Astrocyte of the cerebellum (primary cell): ENCODE measurements at regions of chr7 and their contacts with region 1.

Region 1: DNA sequence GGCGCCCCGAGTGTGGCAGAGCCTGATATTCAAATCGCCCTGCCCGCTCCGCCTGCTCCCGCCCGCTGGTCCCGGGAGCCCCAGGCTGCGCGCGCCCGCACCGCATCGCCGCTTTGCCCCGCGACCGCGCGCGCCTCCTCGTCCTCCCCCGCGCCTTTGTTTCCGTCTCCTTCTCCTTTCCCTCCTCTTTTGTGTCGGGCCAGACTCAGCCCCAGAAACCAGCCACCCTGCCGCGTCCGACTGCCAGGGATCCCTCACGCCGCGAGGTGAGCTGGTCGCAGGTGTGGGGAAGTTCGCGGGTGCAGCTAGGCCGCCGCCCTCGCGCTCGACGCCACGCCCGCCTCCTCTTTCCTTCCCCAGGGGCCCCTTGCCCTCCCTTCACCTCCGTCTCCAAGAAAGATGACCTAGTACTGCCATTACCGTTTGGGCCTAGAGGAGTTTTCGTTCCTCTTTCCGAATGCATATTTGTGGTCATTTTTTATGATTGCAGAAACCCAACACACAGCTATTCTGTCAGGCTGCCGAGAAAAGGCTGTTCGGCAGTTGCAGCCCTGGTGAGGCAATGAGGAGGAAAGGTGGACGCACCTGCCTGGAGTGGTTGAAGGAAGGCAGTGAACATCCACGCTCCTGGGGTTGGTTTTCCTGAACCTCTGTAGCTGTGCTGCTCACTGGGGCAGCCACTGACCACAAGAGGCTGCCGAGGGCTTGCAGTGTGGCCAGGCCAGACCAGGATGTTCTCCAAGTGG is 107.3 kb downstream of the SNX10 start:
- DNase-seq: no peak
- H3K4me3 ChIP-seq: peak overlapping the region; percentile 51
- CTCF ChIP-seq: no peak

Region 2: GRCh38 chr7:25894902-25895791 is 503.8 kb before region 1 on chr7:
- in situ Hi-C with region 1: loop called (anchors 25 kb)
- DNase-seq: no peak
- H3K4me3 ChIP-seq: peak overlapping the region; percentile 16
- CTCF ChIP-seq: peak; percentile 69